Kidney (tissue), 22 donors: ENCODE measurements at regions of chr5 and their contacts with region 1.

Region 1: DNA sequence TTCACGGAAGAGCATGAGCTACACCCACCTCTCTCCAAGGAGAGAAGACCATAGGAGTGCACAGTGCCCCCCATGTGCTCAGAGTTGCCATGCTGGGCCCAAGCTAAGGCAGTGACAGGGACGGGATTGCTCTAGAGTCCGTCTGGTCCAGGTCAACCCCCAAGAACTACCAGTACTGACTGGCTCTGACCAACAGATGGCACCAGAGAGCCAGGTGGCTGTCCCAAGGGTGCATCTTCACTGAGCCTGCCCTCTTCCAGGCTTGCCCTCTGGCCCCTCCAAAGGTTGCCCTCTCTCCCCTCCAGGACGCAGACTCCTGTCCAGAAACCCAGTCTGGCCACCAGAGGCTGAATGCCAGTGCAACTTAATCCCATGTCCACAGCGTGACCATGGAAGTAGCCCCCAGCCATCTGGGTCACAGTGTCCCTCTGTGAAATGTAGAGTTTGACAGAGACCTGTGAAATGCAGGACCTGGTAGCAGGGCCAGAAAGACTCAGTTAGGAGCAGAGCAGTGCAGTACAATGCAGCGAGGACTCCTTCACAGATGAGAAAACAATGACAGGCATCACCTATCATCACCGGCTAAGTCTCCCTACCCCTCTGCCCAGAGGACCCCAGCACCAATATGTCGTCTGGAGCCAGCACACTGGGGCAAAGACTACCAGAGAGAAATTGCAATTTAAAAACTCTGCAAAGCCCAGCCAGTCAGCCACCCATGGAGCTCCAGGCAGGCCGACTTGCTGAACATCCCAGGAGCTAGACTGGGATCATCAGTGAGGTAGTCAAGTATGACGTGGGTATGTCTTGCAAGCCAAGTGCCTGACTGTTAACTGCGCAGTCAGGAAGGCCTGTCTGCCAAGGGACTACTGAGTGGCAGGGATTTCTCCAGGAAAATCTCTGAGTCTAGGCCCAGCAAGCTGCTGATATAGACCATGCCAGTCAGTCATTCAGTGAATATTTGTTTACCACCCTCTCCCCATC is 7.7 kb upstream of the SKP1 start:
- DNase-seq: peak; percentile 68 to 80 (median 74)
- H3K4me3 ChIP-seq: no peak overlapping the region
- H3K27ac ChIP-seq: no peak overlapping the region
- H3K4me1 ChIP-seq: peaks cover 0 to 7% (median 0%) of the 10 kb centered on the region in 3 donors
- H3K27me3 ChIP-seq: no peaks in the 10 kb centered on the region
- CTCF ChIP-seq: peak; percentile 91

Region 2: GRCh38 chr5:134018154-134018985 is 166.1 kb before region 1 on chr5:
- intact Hi-C with region 1: no loop called
- DNase-seq: peak in 2 of 5 donors; percentile 49 to 50
- H3K4me3 ChIP-seq: no peak overlapping the region
- H3K27ac ChIP-seq: peak overlapping the region in 1 of 2 donors; percentile 41
- H3K4me1 ChIP-seq: peaks cover 0 to 5% (median 0%) of the 10 kb centered on the region in 3 donors
- H3K27me3 ChIP-seq: no peaks in the 10 kb centered on the region
- CTCF ChIP-seq: no peak

Region 3: DNA sequence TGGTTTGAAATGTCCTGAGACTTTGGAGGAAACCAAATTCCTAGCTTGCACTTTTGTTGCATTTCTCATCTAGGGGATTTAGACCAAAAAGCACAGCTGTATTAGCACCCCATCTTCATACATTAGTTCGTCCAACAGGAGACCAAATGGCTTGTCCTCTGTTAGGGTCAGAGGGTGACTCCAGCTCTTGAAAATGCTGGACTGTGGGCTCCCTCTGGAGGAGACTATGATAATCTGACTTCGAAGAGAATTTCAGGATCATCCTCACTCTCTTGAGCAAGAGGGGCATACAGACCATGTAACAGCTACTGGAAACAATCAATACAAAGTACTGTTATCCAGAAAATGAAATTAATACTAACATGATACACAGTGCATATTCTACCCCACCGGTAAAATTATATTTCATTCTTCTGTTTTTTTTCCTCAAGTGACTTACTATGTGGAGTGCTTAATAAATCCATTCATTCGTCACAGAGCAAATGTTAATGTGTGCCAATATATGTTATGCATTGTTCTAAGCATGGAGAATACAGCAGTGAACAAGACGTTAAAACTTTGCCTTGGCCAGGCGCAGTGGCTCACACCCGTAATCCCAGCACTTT is 105.2 kb after region 1 on chr5:
- intact Hi-C with region 1: loop called (anchors 5 kb)
- DNase-seq: peak in 4 of 5 donors; percentile 61 to 87 (median 72)
- H3K4me3 ChIP-seq: no peak overlapping the region
- H3K27ac ChIP-seq: no peak overlapping the region
- H3K4me1 ChIP-seq: no peaks in the 10 kb centered on the region
- H3K27me3 ChIP-seq: no peaks in the 10 kb centered on the region
- CTCF ChIP-seq: peak; percentile 72